A673 (cell line): ENCODE measurements at regions of chr3 and their contacts with region 1.

Region 1: DNA sequence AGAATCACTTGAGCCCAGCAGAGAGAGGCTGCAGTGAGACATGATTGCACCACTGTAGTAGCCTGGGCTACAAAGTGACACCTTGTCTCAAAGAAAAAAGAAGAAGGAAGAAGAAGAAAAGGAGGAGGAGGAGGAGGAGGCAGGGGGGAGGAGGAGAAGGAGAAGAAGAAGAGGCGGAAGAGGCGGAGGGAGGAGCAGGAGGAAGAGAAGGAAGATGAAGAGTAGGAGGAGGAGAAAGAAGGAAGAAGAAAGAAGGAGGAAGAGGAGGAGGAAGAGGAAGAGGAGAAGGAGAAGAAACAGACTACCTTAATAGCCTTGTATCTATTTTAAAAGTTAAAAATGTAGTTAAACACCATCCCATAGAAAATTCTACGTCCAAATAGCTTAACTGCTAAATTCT is 19.1 kb upstream of the ARF4 start:
- DNase-seq: no peak
- H3K4me3 ChIP-seq: no peak overlapping the region
- H3K27ac ChIP-seq: no peak overlapping the region
- H3K4me1 ChIP-seq: no peaks in the 10 kb centered on the region
- H3K27me3 ChIP-seq: no peaks in the 10 kb centered on the region
- CTCF ChIP-seq: no peak

Region 2: DNA sequence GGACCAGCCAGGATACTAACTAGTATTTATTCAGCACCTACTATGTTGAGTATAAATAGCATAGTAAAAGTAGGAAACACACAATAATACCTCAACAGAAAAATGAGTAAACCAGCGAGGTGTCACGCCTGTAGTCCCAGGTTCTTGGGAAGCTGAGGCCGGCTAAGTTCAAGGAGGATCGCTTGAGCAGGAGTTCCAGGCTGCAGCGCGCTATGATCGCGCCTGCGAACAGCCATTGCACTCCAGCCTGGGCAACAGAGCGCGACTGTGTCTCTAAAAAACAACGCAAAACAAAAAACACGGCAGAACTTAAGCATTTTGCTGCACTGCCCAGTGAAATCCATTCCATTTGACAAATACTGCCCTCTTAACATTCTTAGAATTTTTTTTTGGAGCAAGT is 77.9 kb after region 1 on chr3:
- CTCF ChIA-PET with region 1: no interaction called
- POLR2A ChIA-PET with region 1: interaction called, 10 read pairs
- intact Hi-C with region 1: no loop called
- DNase-seq: no peak
- H3K4me3 ChIP-seq: no peak overlapping the region
- H3K27ac ChIP-seq: no peak overlapping the region
- H3K4me1 ChIP-seq: no peaks in the 10 kb centered on the region
- H3K27me3 ChIP-seq: no peaks in the 10 kb centered on the region
- CTCF ChIP-seq: no peak

Region 3: DNA sequence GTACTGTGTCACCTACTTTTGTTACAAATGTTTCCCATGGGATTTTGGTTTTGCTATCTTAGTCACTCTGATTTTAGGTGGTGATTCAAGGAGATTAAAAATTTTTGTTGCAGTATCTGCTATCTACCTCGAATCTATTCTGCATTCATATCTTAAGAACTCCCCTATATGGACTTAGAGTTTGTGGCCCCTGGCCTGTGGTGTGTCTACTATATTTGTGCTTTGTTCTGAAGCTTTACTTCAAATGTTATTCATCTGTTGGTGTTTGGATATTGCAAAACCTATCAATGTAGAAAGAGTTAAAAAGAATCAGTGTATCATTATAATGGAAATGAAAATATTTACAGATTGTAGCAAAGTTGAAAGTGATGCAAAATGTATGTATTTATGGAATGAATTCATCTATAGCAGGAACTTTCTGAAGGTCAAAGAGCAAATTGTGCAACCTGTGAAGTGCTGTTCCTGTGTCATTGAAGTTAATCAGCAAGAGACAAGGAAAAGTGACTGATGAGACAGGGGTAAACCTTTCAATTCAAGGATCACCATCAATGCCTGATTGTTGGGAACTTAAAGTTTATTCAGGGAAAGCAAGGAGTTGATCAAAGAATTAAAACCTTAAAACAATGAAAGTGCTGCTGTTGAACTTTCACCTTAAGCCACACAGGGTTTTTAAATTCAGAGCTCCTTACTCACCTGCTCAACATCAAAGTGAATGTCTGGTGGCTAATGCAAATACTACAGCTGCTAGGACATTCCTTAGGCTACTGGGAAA is 210.9 kb after region 1 on chr3:
- CTCF ChIA-PET with region 1: no interaction called
- POLR2A ChIA-PET with region 1: no interaction called
- intact Hi-C with region 1: no loop called
- DNase-seq: no peak
- H3K4me3 ChIP-seq: no peak overlapping the region
- H3K27ac ChIP-seq: no peak overlapping the region
- H3K4me1 ChIP-seq: peaks cover under 1% of the 10 kb centered on the region
- H3K27me3 ChIP-seq: no peaks in the 10 kb centered on the region
- CTCF ChIP-seq: no peak